Activated CD4-positive, alpha-beta memory T cell treated with anti-CD3 and anti-CD28 coated beads for 36 hours (primary cell): ENCODE measurements at regions of chr3 and their contacts with region 1.

Region 1: GRCh38 chr3:189530822-189531221 is 100.4 kb upstream of the TP63 start:
- DNase-seq: peak; percentile 26
- H3K4me3 Mint-ChIP-seq: no peak overlapping the region
- H3K27ac Mint-ChIP-seq: peak overlapping the region; percentile 67
- H3K4me1 Mint-ChIP-seq: peaks cover 23% of the 10 kb centered on the region
- H3K27me3 Mint-ChIP-seq: peaks cover 1% of the 10 kb centered on the region

Region 2: GRCh38 chr3:189276481-189277219 is 254.2 kb before region 1 on chr3:
- CTCF ChIA-PET with region 1: no interaction called
- POLR2A ChIA-PET with region 1: no interaction called
- intact Hi-C with region 1: loop called (anchors 2 kb)
- DNase-seq: no peak
- H3K4me3 Mint-ChIP-seq: no peak overlapping the region
- H3K27ac Mint-ChIP-seq: peak overlapping the region; percentile 5
- H3K4me1 Mint-ChIP-seq: peaks cover 30% of the 10 kb centered on the region
- H3K27me3 Mint-ChIP-seq: no peaks in the 10 kb centered on the region

Region 3: GRCh38 chr3:189334064-189334920 is 196.5 kb before region 1 on chr3:
- CTCF ChIA-PET with region 1: interaction called, 4 read pairs
- POLR2A ChIA-PET with region 1: interaction called, 3 read pairs
- intact Hi-C with region 1: loop called (anchors 1 kb)
- DNase-seq: no peak
- H3K4me3 Mint-ChIP-seq: no peak overlapping the region
- H3K27ac Mint-ChIP-seq: no peak overlapping the region
- H3K4me1 Mint-ChIP-seq: peaks cover 40% of the 10 kb centered on the region
- H3K27me3 Mint-ChIP-seq: no peaks in the 10 kb centered on the region

Region 4: GRCh38 chr3:189563866-189564563 is 33.2 kb after region 1 on chr3:
- CTCF ChIA-PET with region 1: interaction called, 3 read pairs
- POLR2A ChIA-PET with region 1: no interaction called
- intact Hi-C with region 1: loop called (anchors 1 kb)
- DNase-seq: peak; percentile 74
- H3K4me3 Mint-ChIP-seq: no peak overlapping the region
- H3K27ac Mint-ChIP-seq: no peak overlapping the region
- H3K4me1 Mint-ChIP-seq: peaks cover 12% of the 10 kb centered on the region
- H3K27me3 Mint-ChIP-seq: peaks cover 1% of the 10 kb centered on the region

Region 5: DNA sequence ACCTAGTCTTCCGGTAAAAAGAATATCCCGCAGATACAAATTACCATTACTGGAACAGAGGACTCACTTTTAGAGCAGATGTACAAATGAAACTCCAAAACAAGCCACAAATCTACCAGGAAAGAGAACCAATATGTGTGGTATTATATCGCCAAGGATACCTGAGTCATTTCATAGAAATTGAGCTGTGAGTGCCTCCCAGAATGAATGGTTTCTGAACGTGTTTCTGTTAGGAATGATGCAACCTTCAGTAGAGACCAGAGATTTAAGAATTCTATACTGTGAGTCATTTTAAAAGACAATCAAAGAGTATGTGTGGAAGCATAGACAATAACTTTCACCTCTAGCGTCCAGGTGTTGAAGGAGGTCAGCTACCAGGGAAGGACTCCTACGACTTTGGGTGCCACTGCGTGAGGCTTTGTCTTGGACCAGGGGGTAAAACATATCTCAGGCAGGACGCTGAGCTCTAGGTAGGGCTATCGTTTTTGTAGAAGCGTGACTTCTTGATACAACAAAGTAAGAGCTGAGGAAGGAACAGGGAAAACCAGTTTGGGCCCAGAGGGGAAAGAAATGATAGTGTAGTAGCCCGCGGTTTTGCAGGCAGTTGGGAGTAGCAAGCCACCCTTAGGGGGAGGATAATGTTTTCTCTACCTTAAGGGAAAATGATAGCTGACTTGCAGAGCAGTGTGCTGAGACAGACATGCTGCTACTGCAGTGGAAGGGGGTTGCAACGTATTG is 310.8 kb after region 1 on chr3:
- CTCF ChIA-PET with region 1: no interaction called
- POLR2A ChIA-PET with region 1: no interaction called
- intact Hi-C with region 1: loop called (anchors 1 kb)
- DNase-seq: no peak
- H3K4me3 Mint-ChIP-seq: no peak overlapping the region
- H3K27ac Mint-ChIP-seq: no peak overlapping the region
- H3K4me1 Mint-ChIP-seq: peaks cover 12% of the 10 kb centered on the region
- H3K27me3 Mint-ChIP-seq: peaks cover 3% of the 10 kb centered on the region